ENCODE measurements at regions of chr9 and their contacts with region 1.

Region 1: DNA sequence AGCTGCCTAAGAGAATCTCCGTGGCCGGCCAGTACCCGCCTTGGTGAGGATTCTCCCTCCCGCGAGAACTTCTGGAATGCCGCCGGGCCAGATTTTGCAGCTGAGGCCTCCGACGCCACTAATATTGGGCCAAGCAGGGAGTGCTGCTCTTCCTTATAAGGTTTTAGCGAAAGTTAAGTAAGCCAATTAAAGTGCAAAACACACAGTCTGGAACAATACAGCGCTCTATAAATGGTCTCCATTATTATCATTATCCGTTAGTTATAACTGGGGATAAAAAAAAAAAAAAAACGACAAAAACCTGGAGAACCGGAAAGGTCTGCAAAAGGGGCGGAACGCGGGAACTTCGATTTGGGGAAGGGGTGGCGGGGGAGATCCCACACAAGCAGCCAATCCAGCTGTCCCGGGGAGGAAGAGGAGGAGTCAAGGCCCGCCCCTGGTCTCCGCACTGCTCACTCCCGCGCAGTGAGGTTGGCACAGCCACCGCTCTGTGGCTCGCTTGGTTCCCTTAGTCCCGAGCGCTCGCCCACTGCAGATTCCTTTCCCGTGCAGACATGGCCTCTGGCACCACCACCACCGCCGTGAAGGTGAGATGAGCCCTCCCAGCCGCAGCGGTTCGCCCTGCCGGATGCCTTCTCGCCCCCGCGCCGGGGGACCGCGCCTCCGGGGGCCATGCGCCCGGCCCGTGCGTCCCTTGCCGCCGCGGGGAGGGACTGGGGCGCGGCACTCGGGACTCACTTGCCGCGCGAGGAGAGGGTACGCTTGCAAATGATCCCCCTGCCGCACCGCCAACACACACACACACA is at the start of gene MTAP:
- DNase-seq: peak; percentile 29 to 75 (median 51)
- ATAC-seq: peak; percentile 76 to 84 (median 77)
- H3K4me3 ChIP-seq: peak within 1 kb of the TSS; percentile 67 to 94
- H3K4me3 Mint-ChIP-seq: peak within 1 kb of the TSS; percentile 99 to 100 (median 99)
- H3K27ac ChIP-seq: peak within 1 kb of the TSS; percentile 57
- H3K27ac Mint-ChIP-seq: peak within 1 kb of the TSS; percentile 96 to 97
- H3K4me1 ChIP-seq: peaks cover 11 to 22% of the 10 kb centered on the region in 2 experiments
- H3K4me1 Mint-ChIP-seq: peaks cover 44 to 50% (median 44%) of the 10 kb centered on the region in 3 donors
- H3K27me3 ChIP-seq: peaks cover 0 to 6% of the 10 kb centered on the region in 2 experiments
- H3K27me3 Mint-ChIP-seq: peaks cover 7 to 15% of the 10 kb centered on the region in 2 donors
- total RNA-seq, gene MTAP: 32.0 to 41.9 (median 34.6) TPM

Region 2: DNA sequence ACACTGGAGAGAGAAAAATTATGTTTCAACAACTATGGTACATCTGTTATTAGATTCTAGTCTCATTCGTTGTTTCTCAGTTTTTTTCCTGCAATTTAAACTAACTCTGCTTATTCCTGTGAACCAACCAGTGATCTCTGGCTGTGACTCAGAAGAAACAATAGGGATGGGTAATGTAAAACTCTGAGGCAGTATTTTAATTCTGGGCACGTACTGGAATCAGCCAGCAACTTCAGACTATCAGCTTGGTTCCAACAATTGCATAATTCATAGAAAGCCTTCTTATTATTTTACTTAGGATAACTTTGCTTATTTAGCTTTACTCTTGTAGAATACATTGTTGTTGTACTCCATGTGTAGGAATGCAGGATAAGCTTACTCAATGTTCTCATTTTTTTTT is 1208.8 kb before region 1 on chr9:
- CTCF ChIA-PET with region 1: no interaction called
- POLR2A ChIA-PET with region 1: no interaction called
- DNase-seq: no peak
- ATAC-seq: no peak
- H3K4me3 ChIP-seq: no peak overlapping the region
- H3K4me3 Mint-ChIP-seq: no peak overlapping the region
- H3K27ac ChIP-seq: no peak overlapping the region
- H3K27ac Mint-ChIP-seq: no peak overlapping the region
- H3K4me1 ChIP-seq: peaks cover 0 to 14% of the 10 kb centered on the region in 2 experiments
- H3K4me1 Mint-ChIP-seq: peaks cover 55 to 70% (median 59%) of the 10 kb centered on the region in 3 donors
- H3K27me3 ChIP-seq: no peaks in the 10 kb centered on the region
- H3K27me3 Mint-ChIP-seq: no peaks in the 10 kb centered on the region

Region 3: GRCh38 chr9:21688108-21689102 is 114.0 kb before region 1 on chr9:
- CTCF ChIA-PET with region 1: no interaction called
- POLR2A ChIA-PET with region 1: no interaction called
- DNase-seq: no peak
- ATAC-seq: no peak
- H3K4me3 ChIP-seq: no peak overlapping the region
- H3K4me3 Mint-ChIP-seq: peak overlapping the region in 1 of 3 donors; percentile 9
- H3K27ac ChIP-seq: no peak overlapping the region
- H3K27ac Mint-ChIP-seq: no peak overlapping the region
- H3K4me1 ChIP-seq: no peaks in the 10 kb centered on the region
- H3K4me1 Mint-ChIP-seq: peaks cover 10 to 21% (median 18%) of the 10 kb centered on the region in 3 donors
- H3K27me3 ChIP-seq: no peaks in the 10 kb centered on the region
- H3K27me3 Mint-ChIP-seq: no peaks in the 10 kb centered on the region

Region 4: DNA sequence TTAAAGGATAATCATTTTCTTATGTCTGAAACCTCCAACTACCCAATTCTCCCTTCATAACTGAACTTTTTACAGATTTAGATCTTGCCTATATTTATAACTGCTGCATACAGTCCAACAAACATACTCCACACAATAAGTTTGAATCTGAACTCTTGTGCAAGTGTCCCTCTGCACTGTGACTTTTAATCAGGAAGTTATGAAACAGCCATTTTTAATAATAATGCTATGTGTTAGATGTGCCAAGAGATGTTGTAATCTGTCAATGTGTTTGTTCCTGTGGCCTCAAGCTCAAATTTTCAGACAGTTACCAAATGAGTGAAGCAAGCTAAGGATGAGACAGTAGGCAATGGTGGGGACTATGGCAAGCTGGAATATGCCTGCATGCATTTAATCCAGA is 57.6 kb before region 1 on chr9:
- CTCF ChIA-PET with region 1: no interaction called
- POLR2A ChIA-PET with region 1: no interaction called
- DNase-seq: no peak
- ATAC-seq: no peak
- H3K4me3 ChIP-seq: no peak overlapping the region
- H3K4me3 Mint-ChIP-seq: no peak overlapping the region
- H3K27ac ChIP-seq: no peak overlapping the region
- H3K27ac Mint-ChIP-seq: no peak overlapping the region
- H3K4me1 ChIP-seq: no peaks in the 10 kb centered on the region
- H3K4me1 Mint-ChIP-seq: no peaks in the 10 kb centered on the region
- H3K27me3 ChIP-seq: no peaks in the 10 kb centered on the region
- H3K27me3 Mint-ChIP-seq: peaks cover 6 to 18% of the 10 kb centered on the region in 2 donors

Region 5: DNA sequence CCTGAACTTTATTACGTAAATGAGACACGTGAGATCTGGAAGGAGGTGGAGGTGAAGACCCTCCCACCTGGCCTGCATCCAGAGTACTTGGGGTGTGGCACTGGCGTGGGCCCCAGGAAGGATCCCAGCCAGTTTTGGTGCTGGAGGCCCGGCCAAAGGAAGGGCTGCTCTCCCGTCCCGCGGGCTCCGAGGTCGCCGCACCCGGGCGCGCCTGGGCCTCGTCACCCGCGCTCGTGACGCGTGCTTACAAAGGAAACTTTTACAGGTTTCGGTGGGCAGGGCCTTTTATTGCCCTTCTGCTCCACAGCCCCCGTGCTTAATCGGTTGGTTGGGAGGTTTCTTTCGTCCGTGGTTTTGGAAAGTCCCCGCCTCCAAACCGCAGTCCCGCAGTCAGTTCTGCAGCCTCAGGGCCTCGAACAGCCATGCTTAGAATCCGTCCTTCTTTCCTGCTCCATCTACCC is 162.6 kb after region 1 on chr9:
- CTCF ChIA-PET with region 1: no interaction called
- POLR2A ChIA-PET with region 1: interaction called in 1 of 2 experiments, 10 read pairs
- DNase-seq: peak in 32 of 35 experiments; percentile 13 to 80 (median 39)
- ATAC-seq: peak; percentile 43 to 84 (median 56)
- H3K4me3 ChIP-seq: peak overlapping the region; percentile 30 to 65
- H3K4me3 Mint-ChIP-seq: peak overlapping the region; percentile 50 to 68 (median 66)
- H3K27ac ChIP-seq: no peak overlapping the region
- H3K27ac Mint-ChIP-seq: peak overlapping the region in 1 of 2 donors; percentile 64
- H3K4me1 ChIP-seq: peaks cover 0 to 32% of the 10 kb centered on the region in 2 experiments
- H3K4me1 Mint-ChIP-seq: peaks cover 14 to 40% (median 32%) of the 10 kb centered on the region in 3 donors
- H3K27me3 ChIP-seq: peaks cover 38 to 56% of the 10 kb centered on the region in 2 experiments
- H3K27me3 Mint-ChIP-seq: peaks cover 92 to 93% of the 10 kb centered on the region in 2 donors